ENCODE measurements at regions of chr11 and their contacts with region 1.

Region 1: DNA sequence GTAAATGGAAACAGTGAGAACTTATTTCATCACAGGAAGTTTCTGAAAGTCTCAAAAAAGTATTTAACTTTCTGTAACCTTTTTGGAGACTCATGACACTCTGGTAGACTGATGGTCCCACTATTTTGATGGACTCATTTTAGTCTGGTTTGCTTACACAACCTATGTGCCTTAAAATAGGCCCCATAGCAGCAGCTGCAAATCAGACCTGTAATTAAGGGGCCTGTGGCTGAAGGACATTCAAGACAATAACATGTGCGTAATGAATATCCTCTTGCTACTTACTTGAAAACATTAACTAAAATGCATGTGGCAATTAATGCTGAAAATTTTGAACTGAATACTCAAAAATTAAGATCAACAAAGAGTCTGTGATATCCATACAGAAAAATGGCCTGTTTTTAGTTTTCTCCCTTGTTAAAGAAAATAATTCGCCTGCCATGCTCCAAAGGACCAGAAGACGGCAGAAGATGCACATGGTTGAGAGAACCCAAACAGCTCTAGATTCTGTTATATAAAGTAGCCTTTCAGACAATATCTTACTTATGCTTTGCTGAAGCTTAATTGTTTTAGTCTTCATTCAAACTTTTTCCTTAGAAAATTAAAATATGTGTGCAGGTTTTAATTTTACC is 568.5 kb downstream of the KCNA4 start:
- DNase-seq: peak; percentile 25
- ATAC-seq: peak; percentile 83
- H3K4me3 ChIP-seq: no peak overlapping the region
- H3K27ac ChIP-seq: no peak overlapping the region
- H3K4me1 ChIP-seq: peaks cover 1% of the 10 kb centered on the region; the same call in 1 of the 2 replicates
- H3K27me3 ChIP-seq: no peaks in the 10 kb centered on the region
- CTCF ChIP-seq: peak; percentile 49
- POLR2A ChIP-seq: no peak
- RAD21 ChIP-seq: peak; percentile 50

Region 2: DNA sequence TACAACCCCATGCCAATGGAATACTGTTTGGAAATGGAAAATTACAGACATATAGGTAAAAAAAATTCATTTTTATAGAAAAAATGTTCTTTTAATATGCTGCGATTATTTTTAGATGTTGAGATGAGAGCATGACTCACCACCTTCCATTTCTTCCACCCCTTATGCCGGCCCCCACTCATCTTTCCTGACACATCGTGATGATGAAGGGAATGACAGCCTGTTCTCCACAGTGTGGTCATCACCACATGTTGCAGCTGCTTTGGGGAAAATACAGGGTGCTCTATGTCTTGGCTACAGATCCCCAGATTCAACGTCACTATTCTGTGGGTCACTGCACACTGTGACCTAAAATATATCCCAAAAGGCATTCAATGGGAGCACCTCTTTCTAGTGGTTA is 424.0 kb before region 1 on chr11:
- CTCF ChIA-PET with region 1: no interaction called
- POLR2A ChIA-PET with region 1: no interaction called
- dilution Hi-C with region 1: no loop called
- in situ Hi-C with region 1: no loop called
- intact Hi-C with region 1: no loop called
- DNase-seq: peak; percentile 46
- ATAC-seq: no peak
- H3K4me3 ChIP-seq: no peak overlapping the region
- H3K27ac ChIP-seq: no peak overlapping the region
- H3K4me1 ChIP-seq: peaks cover 3% of the 10 kb centered on the region; the same call in 1 of the 2 replicates
- H3K27me3 ChIP-seq: no peaks in the 10 kb centered on the region
- CTCF ChIP-seq: no peak
- POLR2A ChIP-seq: no peak
- RAD21 ChIP-seq: no peak

Region 3: GRCh38 chr11:29634248-29634647 is 185.9 kb after region 1 on chr11:
- CTCF ChIA-PET with region 1: no interaction called
- POLR2A ChIA-PET with region 1: no interaction called
- dilution Hi-C with region 1: no loop called
- in situ Hi-C with region 1: no loop called
- intact Hi-C with region 1: loop called (anchors 1 kb)
- DNase-seq: no peak
- ATAC-seq: peak; percentile 27; the same call in 1 of the 2 replicates
- H3K4me3 ChIP-seq: no peak overlapping the region
- H3K27ac ChIP-seq: no peak overlapping the region
- H3K4me1 ChIP-seq: no peaks in the 10 kb centered on the region
- H3K27me3 ChIP-seq: no peaks in the 10 kb centered on the region
- CTCF ChIP-seq: peak; percentile 28; the same call in 1 of the 2 replicates
- POLR2A ChIP-seq: no peak
- RAD21 ChIP-seq: peak; percentile 21

Region 4: GRCh38 chr11:30143098-30143705 is 694.8 kb after region 1 on chr11:
- CTCF ChIA-PET with region 1: interaction called, 3 read pairs
- POLR2A ChIA-PET with region 1: no interaction called
- dilution Hi-C with region 1: no loop called
- in situ Hi-C with region 1: loop called (anchors 25 kb)
- intact Hi-C with region 1: loop called (anchors 2 kb)
- DNase-seq: peak; percentile 15
- ATAC-seq: peak; percentile 83
- H3K4me3 ChIP-seq: no peak overlapping the region
- H3K27ac ChIP-seq: no peak overlapping the region
- H3K4me1 ChIP-seq: no peaks in the 10 kb centered on the region
- H3K27me3 ChIP-seq: no peaks in the 10 kb centered on the region
- CTCF ChIP-seq: peak; percentile 59
- POLR2A ChIP-seq: no peak
- RAD21 ChIP-seq: peak; percentile 40

Region 5: DNA sequence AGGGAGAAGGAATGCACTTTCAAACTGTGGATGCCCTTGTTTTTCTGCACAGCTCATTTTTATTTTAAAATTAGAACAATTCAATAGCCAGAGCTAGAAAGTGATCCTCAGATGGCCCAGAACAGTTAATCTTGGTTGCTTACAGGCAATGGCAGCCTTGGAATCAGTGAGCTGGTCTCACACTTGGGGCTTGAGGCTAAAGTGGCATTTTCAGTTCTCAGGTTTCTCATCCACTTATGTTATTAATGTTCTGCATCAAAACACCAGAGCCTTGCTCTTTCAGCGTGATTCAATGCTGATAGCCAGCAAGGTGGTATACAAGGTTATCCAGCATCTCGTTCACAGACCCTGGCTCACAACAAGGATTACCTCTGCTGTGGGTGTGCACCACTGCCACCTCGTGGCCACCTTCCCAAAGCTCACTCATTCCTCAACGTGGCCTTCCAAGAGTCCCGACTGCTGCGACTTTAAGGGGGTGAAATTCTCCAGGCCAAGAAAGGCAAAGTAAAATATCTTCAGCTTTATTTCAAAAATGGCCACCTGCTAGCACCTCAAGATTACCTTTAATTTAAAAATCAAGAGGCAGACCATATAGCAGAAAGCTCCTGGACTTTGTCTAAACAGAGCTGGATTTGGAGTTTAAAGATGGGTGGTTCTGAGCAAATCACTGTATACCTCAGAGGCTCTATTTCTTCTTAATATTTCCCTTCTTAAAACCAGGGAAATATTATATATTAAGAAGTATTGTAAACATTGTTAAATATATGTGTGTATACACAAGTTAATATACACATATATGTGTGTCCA is 748.2 kb after region 1 on chr11:
- CTCF ChIA-PET with region 1: no interaction called
- POLR2A ChIA-PET with region 1: no interaction called
- dilution Hi-C with region 1: no loop called
- in situ Hi-C with region 1: no loop called
- intact Hi-C with region 1: loop called (anchors 2 kb)
- DNase-seq: peak; percentile 37
- ATAC-seq: peak; percentile 94
- H3K4me3 ChIP-seq: no peak overlapping the region
- H3K27ac ChIP-seq: no peak overlapping the region
- H3K4me1 ChIP-seq: no peaks in the 10 kb centered on the region
- H3K27me3 ChIP-seq: no peaks in the 10 kb centered on the region
- CTCF ChIP-seq: peak; percentile 60
- POLR2A ChIP-seq: no peak
- RAD21 ChIP-seq: peak; percentile 44

Region 6: GRCh38 chr11:30322826-30323710 is 874.7 kb after region 1 on chr11 and contains the start of gene ARL14EP:
- CTCF ChIA-PET with region 1: no interaction called
- POLR2A ChIA-PET with region 1: no interaction called
- dilution Hi-C with region 1: no loop called
- in situ Hi-C with region 1: no loop called
- intact Hi-C with region 1: loop called (anchors 5 kb)
- DNase-seq: peak; percentile 96
- ATAC-seq: peak; percentile 99
- H3K4me3 ChIP-seq: peak within 1 kb of the TSS; percentile 97
- H3K27ac ChIP-seq: peak within 1 kb of the TSS; percentile 96
- H3K4me1 ChIP-seq: peaks cover 6% of the 10 kb centered on the region
- H3K27me3 ChIP-seq: peaks cover 4% of the 10 kb centered on the region; the same call in 1 of the 2 replicates
- CTCF ChIP-seq: no peak
- POLR2A ChIP-seq: peak; percentile 95
- RAD21 ChIP-seq: no peak
- total RNA-seq, gene ARL14EP: 13.8 and 28.1 TPM in 2 replicates